KBM-7 (cell line): ENCODE measurements at regions of chr11 and their contacts with region 1.

Region 1: DNA sequence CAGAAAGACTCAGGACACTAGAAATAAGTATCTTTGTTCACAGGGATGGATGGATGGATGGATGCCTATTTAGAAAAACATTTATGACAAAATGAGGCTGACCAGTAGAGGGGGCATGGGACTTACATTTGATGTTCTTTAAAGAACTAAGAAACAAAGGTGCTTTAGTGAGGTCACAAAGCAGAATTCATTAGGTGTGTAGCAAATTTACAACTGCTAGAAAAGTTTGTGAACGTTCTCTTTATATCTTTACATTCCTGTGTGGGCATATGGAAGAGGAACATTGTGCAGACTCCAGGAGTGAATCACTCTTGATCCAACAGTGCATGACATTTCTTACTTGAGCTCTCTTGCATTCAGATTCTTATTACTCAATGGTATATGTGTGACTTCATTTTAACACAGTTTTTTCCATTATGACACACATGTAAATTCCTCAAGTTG is 15.8 kb upstream of the SIK2 start:
- DNase-seq: peak; percentile 61

Region 2: DNA sequence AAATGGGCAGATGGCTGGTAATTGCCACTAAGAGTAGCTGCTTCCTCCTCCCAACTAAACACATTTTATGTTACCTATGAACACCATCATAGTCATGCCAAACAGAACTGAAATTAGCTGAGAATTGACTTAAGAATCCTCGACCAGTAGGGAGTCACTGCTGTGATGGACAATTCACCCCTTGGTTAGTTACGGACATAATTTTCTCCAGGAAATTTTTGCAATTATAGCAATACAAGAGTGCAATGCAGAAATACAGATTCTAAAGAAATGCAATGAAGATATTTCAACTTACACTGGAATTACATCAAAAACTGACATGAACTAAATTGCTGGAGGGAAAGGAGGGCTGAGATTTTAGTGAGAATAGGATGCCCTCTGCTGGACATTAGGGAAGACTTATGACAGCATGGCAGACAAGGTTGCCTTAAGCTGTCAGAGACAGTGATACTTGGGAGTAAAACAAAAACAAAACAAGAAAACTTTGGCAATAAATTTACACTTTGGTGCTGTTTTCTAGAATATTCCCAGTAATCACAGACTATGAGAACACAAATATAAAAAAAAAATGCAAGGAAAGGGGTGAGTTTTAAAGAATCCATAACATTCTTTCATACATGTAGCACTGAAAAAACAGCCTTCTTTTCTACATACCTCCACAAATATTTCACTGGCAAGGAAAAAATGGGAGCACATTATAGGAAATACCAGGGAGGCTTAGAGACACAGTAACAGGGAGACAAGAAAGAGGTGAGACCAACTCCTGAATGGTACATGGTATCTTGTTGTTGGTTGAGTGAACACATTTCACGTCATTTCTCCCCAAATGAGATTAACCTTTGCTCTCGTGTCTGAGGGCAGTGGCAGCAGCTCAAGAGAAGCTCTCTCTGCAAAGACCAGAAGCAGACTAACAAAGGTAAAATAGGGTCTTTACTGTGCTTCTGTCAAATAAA is 191.0 kb after region 1 on chr11:
- in situ Hi-C with region 1: loop called (anchors 25 kb)
- DNase-seq: peak; percentile 76